ENCODE measurements at regions of chr14 and their contacts with region 1.

Region 1: DNA sequence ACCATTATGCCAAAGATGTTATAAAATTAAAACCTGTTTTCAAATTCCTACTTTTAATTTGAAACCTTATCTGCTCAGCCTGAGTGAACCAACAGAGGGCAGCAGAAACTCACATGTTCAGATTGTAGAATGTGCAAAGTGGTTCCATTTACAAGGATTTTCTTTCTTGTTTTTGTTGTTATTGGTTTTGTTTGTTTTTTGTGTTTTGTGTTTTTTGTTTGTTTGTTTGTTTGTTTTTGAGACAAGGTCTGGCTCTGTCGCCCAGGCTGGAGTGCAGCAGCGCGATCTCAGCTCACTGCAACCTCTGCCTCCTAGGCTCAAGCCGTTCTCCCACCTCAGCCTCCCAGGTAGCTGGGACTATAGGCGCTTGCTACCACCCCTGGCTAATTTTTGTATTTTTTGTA is 22.8 kb upstream of the GARIN2 start:
- DNase-seq: peak; percentile 77
- ATAC-seq: peak; percentile 52
- H3K4me3 ChIP-seq: no peak overlapping the region
- H3K27ac ChIP-seq: no peak overlapping the region
- H3K4me1 ChIP-seq: peaks cover 13% of the 10 kb centered on the region
- H3K27me3 ChIP-seq: no peaks in the 10 kb centered on the region
- CTCF ChIP-seq: peak; percentile 96

Region 2: GRCh38 chr14:67187210-67187609 is 20.8 kb after region 1 on chr14:
- CTCF ChIA-PET with region 1: no interaction called
- POLR2A ChIA-PET with region 1: no interaction called
- intact Hi-C with region 1: loop called (anchors 1 kb)
- DNase-seq: peak; percentile 97
- ATAC-seq: peak; percentile 85
- H3K4me3 ChIP-seq: peak overlapping the region; percentile 52
- H3K27ac ChIP-seq: peak overlapping the region; percentile 87
- H3K4me1 ChIP-seq: peaks cover 35% of the 10 kb centered on the region
- H3K27me3 ChIP-seq: no peaks in the 10 kb centered on the region
- CTCF ChIP-seq: no peak

Region 3: GRCh38 chr14:67221248-67221981 is 55.0 kb after region 1 on chr14:
- CTCF ChIA-PET with region 1: interaction called, 5 read pairs
- POLR2A ChIA-PET with region 1: no interaction called
- intact Hi-C with region 1: loop called (anchors 1 kb)
- DNase-seq: peak; percentile 93
- ATAC-seq: peak; percentile 97
- H3K4me3 ChIP-seq: peak overlapping the region; percentile 29; the same call in 1 of the 2 replicates
- H3K27ac ChIP-seq: peak overlapping the region; percentile 29
- H3K4me1 ChIP-seq: peaks cover 23% of the 10 kb centered on the region
- H3K27me3 ChIP-seq: no peaks in the 10 kb centered on the region
- CTCF ChIP-seq: no peak

Region 4: GRCh38 chr14:67285876-67286452 is 119.5 kb after region 1 on chr14:
- CTCF ChIA-PET with region 1: interaction called, 21 read pairs
- POLR2A ChIA-PET with region 1: no interaction called
- intact Hi-C with region 1: loop called (anchors 1 kb)
- DNase-seq: peak; percentile 86
- ATAC-seq: peak; percentile 52
- H3K4me3 ChIP-seq: no peak overlapping the region
- H3K27ac ChIP-seq: no peak overlapping the region
- H3K4me1 ChIP-seq: no peaks in the 10 kb centered on the region
- H3K27me3 ChIP-seq: no peaks in the 10 kb centered on the region
- CTCF ChIP-seq: peak; percentile 81

Region 5: DNA sequence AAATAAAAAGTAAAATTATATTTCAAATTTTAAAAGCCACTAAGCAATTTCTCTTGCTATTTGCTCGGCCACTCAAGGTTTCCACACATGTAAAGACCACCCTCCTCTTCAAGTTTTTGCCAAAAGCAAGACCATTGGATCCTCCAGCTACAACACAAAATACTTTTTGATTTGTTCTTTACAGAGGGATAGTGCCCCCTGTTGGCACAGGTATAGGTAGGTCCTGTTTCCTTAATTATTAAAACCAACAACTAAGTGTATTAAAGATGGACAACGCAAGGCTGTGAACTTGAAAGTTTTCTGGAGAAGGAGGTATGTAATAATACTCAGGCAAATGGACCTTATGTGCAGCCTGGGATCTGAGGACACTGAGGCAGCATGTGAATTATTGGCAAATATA is 169.3 kb after region 1 on chr14:
- CTCF ChIA-PET with region 1: no interaction called
- POLR2A ChIA-PET with region 1: no interaction called
- intact Hi-C with region 1: loop called (anchors 1 kb)
- DNase-seq: peak; percentile 60
- ATAC-seq: 0 out of 2 replicates have a peak, but pooled peaks have one; percentile 14
- H3K4me3 ChIP-seq: no peak overlapping the region
- H3K27ac ChIP-seq: no peak overlapping the region
- H3K4me1 ChIP-seq: peaks cover 17% of the 10 kb centered on the region
- H3K27me3 ChIP-seq: no peaks in the 10 kb centered on the region
- CTCF ChIP-seq: peak; percentile 90

Region 6: DNA sequence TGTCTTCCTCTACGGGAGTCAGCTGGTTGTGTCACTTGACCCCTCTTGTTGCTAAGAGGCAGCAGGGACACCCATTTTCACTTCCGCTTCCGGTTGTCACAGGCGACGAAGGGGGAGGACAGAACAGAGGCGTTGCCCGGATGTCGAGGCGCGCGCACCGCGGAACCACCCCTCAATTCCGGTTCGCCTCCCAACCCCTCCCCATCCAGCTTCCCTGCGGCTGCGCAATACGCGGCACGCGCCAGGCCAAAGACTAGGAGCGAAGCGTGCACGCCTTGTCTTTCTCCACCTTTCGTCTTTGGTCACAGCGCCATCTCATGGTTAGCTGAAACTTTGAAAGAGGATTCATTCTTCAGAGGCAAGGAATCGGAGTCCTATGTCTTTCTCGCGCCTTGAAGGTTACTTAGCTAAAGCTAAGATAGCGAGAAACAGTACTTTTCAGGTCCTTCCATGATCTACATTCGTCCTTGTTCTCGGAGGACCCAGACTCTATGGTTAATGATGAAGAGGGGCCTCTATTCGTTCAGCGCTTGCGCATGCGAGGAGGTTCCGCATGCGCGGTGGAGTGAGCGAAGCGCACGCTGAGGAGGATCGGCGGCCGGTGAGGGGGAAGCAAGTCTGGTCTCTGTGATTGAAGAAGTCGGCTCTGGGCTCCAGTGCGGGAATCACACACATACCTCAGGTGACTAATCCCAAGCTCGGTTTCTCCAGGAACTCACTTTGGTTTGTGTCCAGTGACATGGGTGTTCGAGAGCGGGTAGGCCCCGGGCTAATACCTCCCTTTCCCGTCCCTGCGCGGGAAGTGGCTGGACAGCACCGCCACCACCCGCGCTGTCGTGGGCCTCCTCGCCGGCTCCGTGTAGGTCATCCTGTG is 193.6 kb after region 1 on chr14 and contains the starts of genes ATP6V1D and EIF2S1:
- CTCF ChIA-PET with region 1: no interaction called
- POLR2A ChIA-PET with region 1: no interaction called
- intact Hi-C with region 1: loop called (anchors 2 kb)
- DNase-seq: peak; percentile 99
- ATAC-seq: peak; percentile 85
- H3K4me3 ChIP-seq: peak within 1 kb of the TSS; percentile 83
- H3K27ac ChIP-seq: peak within 1 kb of the TSS; percentile 79
- H3K4me1 ChIP-seq: peaks cover 40% of the 10 kb centered on the region
- H3K27me3 ChIP-seq: no peaks in the 10 kb centered on the region
- CTCF ChIP-seq: peak; percentile 100
- total RNA-seq, gene ATP6V1D: 69.6 and 85.9 TPM in 2 replicates
- total RNA-seq, gene EIF2S1: 345 and 415 TPM in 2 replicates

Measured in PC-3 (cell line).